Pancreas (tissue), 10 donors: ENCODE measurements at regions of chr10 and their contacts with region 1.

Region 1: GRCh38 chr10:110746254-110746826 is 102.2 kb downstream of the RBM20 start:
- DNase-seq: peak in 5 of 6 donors; percentile 63 to 87 (median 73)
- ATAC-seq: peak; percentile 92 to 99 (median 98)
- H3K4me3 ChIP-seq: no peak overlapping the region
- H3K27ac ChIP-seq: no peak overlapping the region
- H3K4me1 ChIP-seq: no peaks in the 10 kb centered on the region
- H3K27me3 ChIP-seq: no peaks in the 10 kb centered on the region
- CTCF ChIP-seq: peak; percentile 58 to 75 (median 64)

Region 2: DNA sequence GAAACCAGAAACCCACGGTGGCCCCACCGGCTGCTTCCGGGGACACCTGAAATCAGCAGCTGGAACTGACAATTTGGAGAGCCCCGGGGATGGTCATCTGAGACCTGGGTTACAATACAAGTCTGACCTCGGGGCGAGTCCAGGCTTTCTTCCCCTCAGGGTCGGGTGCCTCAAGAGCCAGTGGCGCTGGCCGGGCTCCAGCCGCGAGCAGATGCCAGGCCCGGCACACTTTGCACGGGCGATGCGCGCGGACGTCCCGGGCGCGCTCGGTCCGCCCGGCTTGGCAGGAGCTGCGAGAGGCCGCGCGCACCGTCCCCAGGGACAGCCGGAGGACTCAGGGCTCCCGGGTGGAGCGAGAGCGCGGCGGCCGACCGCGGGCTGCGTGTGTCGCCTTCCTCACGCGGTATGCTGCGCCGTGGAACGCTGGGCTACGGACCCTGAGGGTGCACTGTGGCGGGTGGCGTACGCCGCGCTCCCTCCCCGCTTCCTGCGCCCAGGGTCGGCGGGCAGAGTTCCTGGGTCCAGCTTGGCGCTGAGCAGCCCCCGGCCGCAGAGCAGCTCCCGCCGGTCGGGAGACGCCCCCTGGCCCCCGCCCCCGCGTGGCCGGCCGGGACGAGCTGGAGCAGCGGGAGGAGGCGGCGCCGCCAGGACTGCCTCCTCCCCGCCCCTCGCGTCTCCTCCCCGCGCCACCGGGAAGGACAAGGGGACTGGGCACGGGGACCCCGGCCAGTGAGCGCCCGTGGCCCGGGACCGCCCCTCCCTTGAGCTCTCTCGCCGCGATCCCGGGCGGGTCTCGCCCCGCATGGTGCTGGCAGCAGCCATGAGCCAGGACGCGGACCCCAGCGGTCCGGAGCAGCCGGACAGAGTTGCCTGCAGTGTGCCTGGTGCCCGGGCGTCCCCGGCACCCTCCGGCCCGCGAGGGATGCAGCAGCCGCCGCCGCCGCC is 102.4 kb before region 1 on chr10 and contains the start of gene RBM20:
- intact Hi-C with region 1: no loop called
- DNase-seq: peak in 4 of 6 donors; percentile 26 to 75 (median 53)
- ATAC-seq: peak; percentile 61 to 86 (median 78)
- H3K4me3 ChIP-seq: peak within 1 kb of the TSS; percentile 22 to 71 (median 44)
- H3K27ac ChIP-seq: no peak within 1 kb of the TSS
- H3K4me1 ChIP-seq: peaks cover 0 to 8% (median 4%) of the 10 kb centered on the region in 3 donors
- H3K27me3 ChIP-seq: peaks cover 2 to 59% (median 16%) of the 10 kb centered on the region in 4 donors
- CTCF ChIP-seq: no peak
- total RNA-seq, gene RBM20: 0.79 to 18.3 (median 3.6) TPM

Region 3: DNA sequence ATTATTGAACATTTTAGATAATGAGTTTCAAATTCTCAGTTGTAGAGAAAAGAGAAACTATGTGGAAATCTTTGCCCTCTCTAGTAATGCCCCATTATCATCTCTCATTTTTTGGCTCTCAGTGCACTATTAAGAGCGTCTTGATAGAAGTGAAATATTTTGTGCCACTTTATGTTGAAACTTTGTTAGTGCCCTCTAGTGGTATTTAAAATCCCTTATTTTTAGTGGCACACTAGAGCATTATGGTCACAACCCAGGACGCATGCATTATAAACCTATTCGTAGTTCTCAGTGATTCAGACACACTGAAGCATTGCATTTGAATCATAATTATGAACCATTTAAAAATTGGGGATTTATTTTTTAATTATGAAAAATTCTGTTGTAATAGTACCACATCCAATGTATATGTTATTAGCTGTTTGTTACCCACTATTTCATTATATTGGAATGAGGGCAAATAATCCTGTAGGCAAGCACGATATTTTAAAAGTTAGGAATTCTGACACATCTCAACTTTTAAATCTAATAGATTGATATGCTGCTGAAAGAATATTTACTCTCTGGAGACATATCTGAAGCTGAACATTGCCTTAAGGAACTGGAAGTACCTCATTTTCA is 147.3 kb after region 1 on chr10:
- intact Hi-C with region 1: loop called in 1 of 3 experiments (anchors 10 kb)
- DNase-seq: no peak
- ATAC-seq: peak; percentile 23 to 72 (median 57)
- H3K4me3 ChIP-seq: no peak overlapping the region
- H3K27ac ChIP-seq: peak overlapping the region in 2 of 4 donors; percentile 3 to 10
- H3K4me1 ChIP-seq: peaks cover 32 to 77% (median 59%) of the 10 kb centered on the region in 3 donors
- H3K27me3 ChIP-seq: no peaks in the 10 kb centered on the region
- CTCF ChIP-seq: peak in 3 of 4 donors; percentile 16 to 41 (median 39)

Region 4: DNA sequence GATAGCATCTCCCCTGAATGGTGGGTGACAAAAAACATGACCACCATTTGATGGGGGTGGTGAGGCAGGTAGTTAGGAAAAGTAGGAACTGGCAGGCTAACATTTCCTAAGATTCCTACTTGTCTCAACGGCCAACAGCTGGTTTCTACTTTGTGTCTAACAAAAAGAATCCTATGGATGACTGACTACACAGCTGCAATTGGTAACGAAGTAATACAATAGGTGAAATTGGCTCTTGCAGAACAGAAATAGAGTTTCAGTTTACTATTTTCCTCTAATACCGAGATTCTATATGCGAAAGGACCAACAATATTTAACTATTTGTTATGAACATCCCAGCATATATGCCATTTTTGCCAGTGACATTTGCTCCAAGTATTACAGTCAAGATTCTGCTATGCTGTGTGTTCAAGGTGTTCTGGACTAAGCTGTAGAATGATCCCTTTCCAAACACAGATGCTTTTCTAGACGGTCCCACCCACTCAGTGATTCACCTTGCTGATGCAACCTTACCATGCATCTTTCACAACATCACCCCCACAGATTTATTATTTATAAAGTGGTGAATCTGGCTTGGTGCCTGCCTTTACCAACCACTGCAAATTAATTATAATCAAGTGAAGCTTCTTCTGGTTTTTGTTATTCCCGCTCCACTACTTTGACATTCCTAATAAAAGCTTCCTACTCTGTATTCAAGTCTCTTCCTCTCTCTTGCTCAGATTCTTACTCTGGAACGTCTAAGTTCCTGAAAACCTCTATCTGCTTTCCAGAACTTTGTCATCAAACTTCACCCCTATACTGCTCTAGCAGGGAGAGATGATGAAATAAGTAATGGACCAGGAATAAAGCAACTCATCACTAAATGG is 155.8 kb after region 1 on chr10:
- intact Hi-C with region 1: loop called in 2 of 3 experiments (anchors 10 kb)
- DNase-seq: peak in 1 of 6 donors; percentile 58
- ATAC-seq: peak; percentile 13 to 44 (median 16)
- H3K4me3 ChIP-seq: no peak overlapping the region
- H3K27ac ChIP-seq: no peak overlapping the region
- H3K4me1 ChIP-seq: peaks cover 6 to 38% (median 22%) of the 10 kb centered on the region in 3 donors
- H3K27me3 ChIP-seq: no peaks in the 10 kb centered on the region
- CTCF ChIP-seq: no peak